ENCODE measurements at regions of chr12 and their contacts with region 1.

Region 1: DNA sequence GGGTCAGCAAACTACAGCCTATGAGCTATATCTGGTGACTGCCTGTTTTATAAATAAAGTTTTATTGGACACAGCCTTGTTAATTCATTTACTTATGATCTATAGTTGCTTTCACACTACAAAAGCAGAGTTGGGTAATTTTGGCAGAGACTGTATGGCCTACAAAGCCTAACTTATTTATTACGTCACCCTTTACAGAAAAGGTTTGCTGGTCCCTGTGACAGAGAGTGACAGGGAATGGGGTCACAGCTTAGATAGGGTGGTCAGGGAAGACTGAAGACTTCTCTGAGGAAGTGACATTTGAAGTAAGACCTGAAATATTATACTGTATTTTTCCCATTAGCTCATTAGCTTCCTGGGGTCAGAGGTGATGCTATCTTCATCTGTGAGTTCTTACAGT is 75.7 kb upstream of the NEDD1 start:
- DNase-seq: no peak
- H3K4me3 ChIP-seq: no peak overlapping the region
- H3K4me3 Mint-ChIP-seq: no peak overlapping the region
- H3K27ac Mint-ChIP-seq: no peak overlapping the region
- H3K4me1 ChIP-seq: no peaks in the 10 kb centered on the region
- H3K4me1 Mint-ChIP-seq: no peaks in the 10 kb centered on the region
- H3K27me3 ChIP-seq: no peaks in the 10 kb centered on the region
- H3K27me3 Mint-ChIP-seq: no peaks in the 10 kb centered on the region
- CTCF ChIP-seq: no peak

Region 2: DNA sequence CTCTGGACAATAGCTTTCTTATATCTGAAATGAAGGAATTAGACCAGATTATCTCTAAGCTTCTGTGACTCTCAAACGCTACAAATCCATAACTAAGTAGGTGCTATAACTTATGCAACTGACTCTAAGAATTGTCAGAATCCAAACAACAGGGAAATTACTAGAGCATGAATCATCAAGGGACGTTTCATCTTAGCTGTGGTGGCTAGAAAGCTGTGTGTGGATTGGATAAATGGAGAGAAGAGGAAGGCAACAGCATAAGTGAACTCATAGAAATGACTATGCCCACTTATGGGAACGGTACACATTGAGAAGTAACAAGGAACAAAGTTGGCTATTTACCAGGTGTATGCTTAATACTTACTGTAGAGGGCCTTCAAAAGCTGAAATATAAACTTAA is 20.3 kb before region 1 on chr12:
- CTCF ChIA-PET with region 1: no interaction called
- POLR2A ChIA-PET with region 1: no interaction called
- intact Hi-C with region 1: no loop called
- DNase-seq: peak in 1 of 2 experiments; percentile 30
- H3K4me3 ChIP-seq: no peak overlapping the region
- H3K4me3 Mint-ChIP-seq: peak overlapping the region; percentile 14
- H3K27ac Mint-ChIP-seq: peak overlapping the region; percentile 88
- H3K4me1 ChIP-seq: peaks cover 24% of the 10 kb centered on the region
- H3K4me1 Mint-ChIP-seq: peaks cover 32% of the 10 kb centered on the region
- H3K27me3 ChIP-seq: no peaks in the 10 kb centered on the region
- H3K27me3 Mint-ChIP-seq: no peaks in the 10 kb centered on the region
- CTCF ChIP-seq: no peak

Region 3: GRCh38 chr12:96846293-96846692 is 14.9 kb after region 1 on chr12:
- CTCF ChIA-PET with region 1: no interaction called
- POLR2A ChIA-PET with region 1: no interaction called
- intact Hi-C with region 1: loop called (anchors 1 kb)
- DNase-seq: no peak
- H3K4me3 ChIP-seq: no peak overlapping the region
- H3K4me3 Mint-ChIP-seq: no peak overlapping the region
- H3K27ac Mint-ChIP-seq: no peak overlapping the region
- H3K4me1 ChIP-seq: no peaks in the 10 kb centered on the region
- H3K4me1 Mint-ChIP-seq: no peaks in the 10 kb centered on the region
- H3K27me3 ChIP-seq: no peaks in the 10 kb centered on the region
- H3K27me3 Mint-ChIP-seq: no peaks in the 10 kb centered on the region
- CTCF ChIP-seq: no peak